ENCODE measurements at regions of chr14 and their contacts with region 1.

Region 1: GRCh38 chr14:103104654-103105452 is 10.3 kb downstream of the EXOC3L4 start:
- DNase-seq: no peak
- H3K4me3 ChIP-seq: no peak overlapping the region
- CTCF ChIP-seq: peak; percentile 97

Region 2: GRCh38 chr14:103118019-103118662 is 13.3 kb after region 1 on chr14:
- CTCF ChIA-PET with region 1: interaction called, 79 read pairs
- POLR2A ChIA-PET with region 1: no interaction called
- DNase-seq: no peak
- H3K4me3 ChIP-seq: no peak overlapping the region
- CTCF ChIP-seq: no peak

Region 3: DNA sequence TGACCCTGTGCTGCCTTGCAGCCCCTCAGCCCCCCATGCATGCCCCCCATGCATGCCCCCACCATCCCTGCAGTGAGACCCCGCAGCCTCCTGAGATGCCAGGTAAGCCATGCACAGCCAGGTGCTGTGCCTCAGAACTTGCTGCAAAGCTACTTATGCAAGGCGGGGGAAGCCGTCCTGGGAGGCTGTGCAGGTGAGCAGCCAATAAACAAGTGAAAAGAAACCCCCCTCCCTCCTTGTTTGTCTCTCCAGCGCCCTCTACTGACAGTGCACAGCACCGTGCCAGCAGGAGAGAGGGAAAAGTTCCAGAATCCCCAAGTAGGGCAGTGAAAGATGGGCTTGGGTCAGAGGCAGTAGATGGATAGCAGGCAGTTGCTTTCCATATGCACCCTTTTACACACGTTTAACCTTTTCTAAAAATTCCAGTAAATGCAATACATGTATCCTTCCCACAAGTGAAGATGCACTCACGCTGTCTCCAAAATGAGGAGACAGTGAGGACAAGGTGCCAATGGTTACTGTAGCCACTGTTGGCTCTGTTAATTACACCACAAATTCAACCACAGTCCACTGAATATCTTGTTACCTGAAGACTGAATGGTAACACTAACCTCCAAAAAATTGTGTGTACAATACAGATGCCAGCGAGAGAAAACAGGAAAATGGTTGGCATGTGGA is 36.4 kb after region 1 on chr14:
- CTCF ChIA-PET with region 1: interaction called, 50 read pairs
- POLR2A ChIA-PET with region 1: no interaction called
- DNase-seq: no peak
- H3K4me3 ChIP-seq: no peak overlapping the region
- CTCF ChIP-seq: peak; percentile 62

Region 4: GRCh38 chr14:103216857-103217256 is 112.0 kb after region 1 on chr14:
- CTCF ChIA-PET with region 1: interaction called, 11 read pairs
- POLR2A ChIA-PET with region 1: no interaction called
- DNase-seq: no peak
- H3K4me3 ChIP-seq: no peak overlapping the region
- CTCF ChIP-seq: no peak

Region 5: GRCh38 chr14:103292426-103293374 is 187.8 kb after region 1 on chr14:
- CTCF ChIA-PET with region 1: interaction called, 171 read pairs
- POLR2A ChIA-PET with region 1: interaction called, 3 read pairs
- DNase-seq: no peak
- H3K4me3 ChIP-seq: no peak overlapping the region
- CTCF ChIP-seq: peak; percentile 92

Measured in AG04449 (cell line).